KBM-7 (cell line): ENCODE measurements at regions of chr21 and their contacts with region 1.

Region 1: DNA sequence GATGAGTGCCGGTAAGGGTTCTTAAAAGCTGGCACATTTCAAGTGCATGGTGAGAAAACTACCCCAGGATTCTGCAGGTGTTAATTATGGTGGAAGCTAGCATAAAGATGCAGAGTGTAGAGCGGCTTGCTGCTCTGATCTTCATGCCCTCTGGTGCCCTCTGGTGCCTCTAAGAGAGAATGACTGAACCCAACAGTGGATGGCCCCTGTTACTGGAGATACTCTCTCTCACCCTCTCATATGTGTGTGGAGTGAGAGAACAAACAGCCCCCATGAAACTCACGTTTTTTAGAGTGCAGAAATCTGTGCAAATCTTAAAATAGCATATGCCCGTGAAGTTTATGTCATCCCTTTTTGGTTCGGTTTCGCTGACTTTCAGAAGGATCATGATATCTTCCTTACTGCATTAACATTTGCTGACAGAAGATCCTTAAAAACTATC is 90.0 kb downstream of the GRIK1 start:
- DNase-seq: peak; percentile 79

Region 2: GRCh38 chr21:29078869-29079767 is 770.6 kb before region 1 on chr21:
- in situ Hi-C with region 1: loop called (anchors 25 kb)
- DNase-seq: peak; percentile 90